ENCODE measurements at regions of chr7 and their contacts with region 1.

Region 1: DNA sequence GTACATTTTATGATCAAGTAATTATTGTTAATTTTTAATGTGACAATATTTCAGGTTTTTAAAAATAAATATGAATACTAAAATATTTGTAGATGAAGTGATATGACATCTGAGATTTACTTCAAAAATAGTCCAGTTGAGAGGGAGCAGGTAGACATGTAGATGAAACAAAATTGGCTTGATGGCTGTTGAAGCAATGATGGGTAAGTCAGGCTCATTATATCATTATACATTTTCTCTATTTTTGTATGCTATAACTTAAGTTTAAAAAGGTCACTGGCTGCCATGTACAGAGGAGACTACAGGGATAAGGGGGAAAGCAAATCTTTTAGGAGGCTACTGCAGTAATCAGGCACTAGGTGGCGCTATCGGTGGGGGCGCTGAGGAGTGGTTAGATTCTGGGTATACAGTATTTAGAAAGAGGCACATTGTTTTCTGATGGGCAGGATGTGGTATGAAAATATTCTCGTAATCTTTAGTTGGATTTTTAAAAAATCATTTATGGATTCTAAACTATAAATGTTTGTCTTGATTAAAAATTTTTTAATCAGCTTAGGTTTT is 189.8 kb upstream of the IMMP2L start:
- DNase-seq: peak; percentile 77

Region 2: DNA sequence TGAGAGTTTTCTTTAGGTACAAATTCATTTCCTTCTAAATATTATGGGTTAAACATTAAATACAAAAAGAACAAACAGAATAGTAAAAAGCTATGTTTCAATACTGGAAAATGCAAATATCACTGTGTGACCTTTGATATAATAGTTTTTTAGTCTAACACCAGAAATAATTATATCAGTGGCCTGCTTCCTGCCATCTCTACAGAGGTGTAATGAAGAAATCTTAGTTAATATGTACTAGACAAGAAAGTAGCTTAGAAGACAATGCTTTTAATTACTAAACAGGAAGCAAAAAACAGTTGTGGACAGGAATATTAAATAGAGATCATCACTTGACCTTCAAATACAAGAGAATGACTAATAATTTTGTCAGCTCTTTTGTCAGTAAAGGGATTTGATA is 708.6 kb before region 1 on chr7:
- in situ Hi-C with region 1: no loop called
- DNase-seq: no peak

Region 3: GRCh38 chr7:111841596-111842205 is 89.6 kb after region 1 on chr7:
- in situ Hi-C with region 1: no loop called
- DNase-seq: no peak

Region 4: GRCh38 chr7:111919631-111920179 is 167.6 kb after region 1 on chr7:
- in situ Hi-C with region 1: no loop called
- DNase-seq: no peak

Region 5: DNA sequence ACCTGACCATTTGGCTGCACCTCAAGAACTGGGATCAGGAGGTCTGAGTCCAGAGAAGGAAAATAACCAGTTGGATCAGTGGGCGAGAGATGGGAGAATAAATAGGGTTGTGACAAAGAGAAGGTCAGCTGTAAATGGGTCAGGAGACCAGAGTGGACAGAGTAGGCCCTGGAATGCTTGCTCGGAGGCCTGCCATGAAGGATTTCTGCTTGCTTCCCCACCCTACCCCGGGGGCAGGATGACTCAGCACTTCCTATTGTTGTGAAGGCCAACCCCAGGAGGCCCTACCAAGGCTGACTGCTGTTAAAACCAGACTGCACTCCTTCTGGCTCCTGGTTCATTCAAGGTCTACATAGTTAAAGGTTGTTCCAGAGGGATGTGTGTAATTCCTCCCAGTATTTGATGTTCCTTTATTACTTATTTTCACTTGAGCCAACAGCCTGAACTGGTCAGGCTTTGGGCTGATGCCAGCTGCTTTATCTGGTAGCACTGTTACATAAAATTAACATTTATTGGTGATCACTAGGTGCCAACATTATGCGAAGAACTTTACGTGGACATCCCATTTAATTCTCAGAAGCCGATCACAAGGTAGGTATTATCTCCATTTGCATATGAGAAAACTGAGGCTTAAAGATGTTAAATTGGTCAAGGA is 670.9 kb after region 1 on chr7:
- in situ Hi-C with region 1: loop called (anchors 25 kb)
- DNase-seq: peak; percentile 61